CD8-positive, alpha-beta T cell (primary cell): ENCODE measurements at regions of chr6 and their contacts with region 1.

Region 1: DNA sequence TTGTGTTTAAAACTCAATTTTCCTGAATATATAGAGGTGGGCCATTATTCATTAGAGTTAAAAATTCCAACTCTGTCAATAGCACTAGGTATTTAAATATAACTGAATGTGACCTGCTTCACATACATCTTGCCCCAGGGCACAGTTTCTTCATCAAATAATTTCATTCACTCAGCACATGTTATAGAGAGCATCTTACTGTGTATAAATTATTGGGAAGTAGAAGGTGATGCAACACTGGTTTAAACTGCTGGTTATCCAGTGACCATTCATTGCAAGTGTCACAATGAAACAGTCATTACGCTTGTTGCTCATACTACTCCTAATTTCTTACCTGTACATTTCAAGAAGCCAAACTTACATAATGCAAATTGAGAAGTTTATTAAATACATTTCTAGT is 93.4 kb downstream of the KHDRBS2 start:
- DNase-seq: no peak
- ATAC-seq: no peak
- H3K4me3 ChIP-seq: no peak overlapping the region
- H3K4me3 Mint-ChIP-seq: no peak overlapping the region
- H3K27ac ChIP-seq: no peak overlapping the region
- H3K27ac Mint-ChIP-seq: no peak overlapping the region
- H3K4me1 ChIP-seq: no peaks in the 10 kb centered on the region
- H3K4me1 Mint-ChIP-seq: no peaks in the 10 kb centered on the region
- H3K27me3 ChIP-seq: no peaks in the 10 kb centered on the region
- H3K27me3 Mint-ChIP-seq: no peaks in the 10 kb centered on the region
- CTCF ChIP-seq: no peak

Region 2: GRCh38 chr6:62285612-62286469 is 93.2 kb after region 1 on chr6 and contains the start of gene KHDRBS2:
- CTCF ChIA-PET with region 1: no interaction called
- POLR2A ChIA-PET with region 1: no interaction called
- intact Hi-C with region 1: no loop called
- DNase-seq: peak in 6 of 9 experiments; percentile 1 to 27 (median 6)
- ATAC-seq: no peak
- H3K4me3 ChIP-seq: no peak within 1 kb of the TSS
- H3K4me3 Mint-ChIP-seq: peak within 1 kb of the TSS; percentile 11
- H3K27ac ChIP-seq: no peak within 1 kb of the TSS
- H3K27ac Mint-ChIP-seq: no peak within 1 kb of the TSS
- H3K4me1 ChIP-seq: no peaks in the 10 kb centered on the region
- H3K4me1 Mint-ChIP-seq: no peaks in the 10 kb centered on the region
- H3K27me3 ChIP-seq: no peaks in the 10 kb centered on the region
- H3K27me3 Mint-ChIP-seq: peaks cover 5% of the 10 kb centered on the region
- CTCF ChIP-seq: no peak
- total RNA-seq, gene KHDRBS2: not detected

Region 3: DNA sequence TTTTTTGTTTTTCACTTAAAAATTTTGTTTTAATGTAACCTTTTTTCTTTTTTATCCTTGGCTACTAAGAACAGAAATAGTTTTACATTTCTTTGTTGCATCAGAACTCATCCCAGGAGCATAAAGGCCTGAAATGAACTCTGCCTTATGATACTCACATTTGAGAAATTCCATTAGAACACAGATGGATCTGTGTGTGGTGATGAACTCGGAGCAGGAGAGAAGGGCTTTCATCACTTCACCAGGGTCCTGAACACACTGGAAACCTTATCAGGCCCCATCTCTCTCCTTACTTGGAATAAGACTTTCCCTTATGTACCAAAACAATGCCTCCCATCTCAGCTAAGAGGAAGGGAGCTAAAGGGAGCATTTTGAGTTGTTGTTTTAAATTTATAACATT is 1582.4 kb after region 1 on chr6:
- CTCF ChIA-PET with region 1: no interaction called
- POLR2A ChIA-PET with region 1: no interaction called
- intact Hi-C with region 1: loop called in 1 of 2 experiments (anchors 10 kb)
- DNase-seq: no peak
- ATAC-seq: no peak
- H3K4me3 ChIP-seq: no peak overlapping the region
- H3K4me3 Mint-ChIP-seq: no peak overlapping the region
- H3K27ac ChIP-seq: no peak overlapping the region
- H3K27ac Mint-ChIP-seq: no peak overlapping the region
- H3K4me1 ChIP-seq: no peaks in the 10 kb centered on the region
- H3K4me1 Mint-ChIP-seq: no peaks in the 10 kb centered on the region
- H3K27me3 ChIP-seq: peaks cover 0 to 3% of the 10 kb centered on the region in 2 experiments
- H3K27me3 Mint-ChIP-seq: peaks cover 17% of the 10 kb centered on the region
- CTCF ChIP-seq: no peak